ENCODE measurements at regions of chr7 and their contacts with region 1.

Region 1: DNA sequence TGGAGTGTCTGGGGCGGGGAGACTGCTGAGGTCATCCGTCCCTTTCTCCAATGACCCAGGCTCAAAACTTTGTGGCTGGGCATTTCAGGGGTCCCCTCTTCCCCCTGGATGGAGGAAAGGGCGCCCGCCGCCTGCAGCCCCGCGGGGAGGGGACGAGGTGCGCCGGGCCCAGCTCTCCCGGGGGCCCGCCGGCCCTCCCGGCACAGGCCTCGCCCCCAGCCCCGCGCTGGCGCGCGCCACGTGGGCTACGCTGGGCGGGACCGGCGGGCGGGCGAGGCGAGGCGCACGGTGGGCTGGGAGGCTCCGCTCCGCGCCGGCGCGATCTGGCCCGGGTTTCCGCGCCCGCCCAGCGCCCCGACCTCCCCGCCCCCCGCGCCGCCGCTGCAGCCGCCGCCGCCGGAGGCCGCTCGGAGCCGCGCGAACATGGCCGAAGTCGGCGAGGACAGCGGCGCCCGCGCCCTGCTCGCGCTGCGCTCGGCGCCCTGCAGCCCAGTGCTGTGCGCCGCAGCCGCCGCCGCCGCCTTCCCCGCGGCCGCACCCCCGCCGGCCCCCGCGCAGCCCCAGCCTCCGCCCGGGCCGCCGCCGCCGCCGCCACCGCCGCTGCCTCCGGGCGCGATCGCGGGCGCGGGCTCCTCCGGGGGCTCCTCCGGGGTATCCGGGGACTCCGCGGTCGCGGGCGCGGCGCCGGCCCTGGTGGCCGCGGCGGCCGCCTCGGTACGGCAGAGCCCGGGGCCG is at the start of gene FOXK1:
- H3K4me3 Mint-ChIP-seq: peak within 1 kb of the TSS; percentile 85
- H3K27ac Mint-ChIP-seq: peak within 1 kb of the TSS; percentile 93
- H3K4me1 Mint-ChIP-seq: peaks cover 47% of the 10 kb centered on the region
- H3K27me3 Mint-ChIP-seq: peaks cover 1% of the 10 kb centered on the region

Region 2: GRCh38 chr7:4641667-4642467 is 40.2 kb before region 1 on chr7:
- intact Hi-C with region 1: loop called (anchors 1 kb)
- H3K4me3 Mint-ChIP-seq: peak overlapping the region; percentile 91
- H3K27ac Mint-ChIP-seq: peak overlapping the region; percentile 91
- H3K4me1 Mint-ChIP-seq: peaks cover 6% of the 10 kb centered on the region
- H3K27me3 Mint-ChIP-seq: peaks cover 1% of the 10 kb centered on the region

Region 3: GRCh38 chr7:4665661-4666060 is 16.4 kb before region 1 on chr7:
- intact Hi-C with region 1: no loop called
- H3K4me3 Mint-ChIP-seq: no peak overlapping the region
- H3K27ac Mint-ChIP-seq: no peak overlapping the region
- H3K4me1 Mint-ChIP-seq: no peaks in the 10 kb centered on the region
- H3K27me3 Mint-ChIP-seq: no peaks in the 10 kb centered on the region

Region 4: GRCh38 chr7:4725014-4725849 is 43.2 kb after region 1 on chr7:
- intact Hi-C with region 1: loop called (anchors 5 kb)
- H3K4me3 Mint-ChIP-seq: peak overlapping the region; percentile 79
- H3K27ac Mint-ChIP-seq: peak overlapping the region; percentile 94
- H3K4me1 Mint-ChIP-seq: peaks cover 74% of the 10 kb centered on the region
- H3K27me3 Mint-ChIP-seq: no peaks in the 10 kb centered on the region

Region 5: DNA sequence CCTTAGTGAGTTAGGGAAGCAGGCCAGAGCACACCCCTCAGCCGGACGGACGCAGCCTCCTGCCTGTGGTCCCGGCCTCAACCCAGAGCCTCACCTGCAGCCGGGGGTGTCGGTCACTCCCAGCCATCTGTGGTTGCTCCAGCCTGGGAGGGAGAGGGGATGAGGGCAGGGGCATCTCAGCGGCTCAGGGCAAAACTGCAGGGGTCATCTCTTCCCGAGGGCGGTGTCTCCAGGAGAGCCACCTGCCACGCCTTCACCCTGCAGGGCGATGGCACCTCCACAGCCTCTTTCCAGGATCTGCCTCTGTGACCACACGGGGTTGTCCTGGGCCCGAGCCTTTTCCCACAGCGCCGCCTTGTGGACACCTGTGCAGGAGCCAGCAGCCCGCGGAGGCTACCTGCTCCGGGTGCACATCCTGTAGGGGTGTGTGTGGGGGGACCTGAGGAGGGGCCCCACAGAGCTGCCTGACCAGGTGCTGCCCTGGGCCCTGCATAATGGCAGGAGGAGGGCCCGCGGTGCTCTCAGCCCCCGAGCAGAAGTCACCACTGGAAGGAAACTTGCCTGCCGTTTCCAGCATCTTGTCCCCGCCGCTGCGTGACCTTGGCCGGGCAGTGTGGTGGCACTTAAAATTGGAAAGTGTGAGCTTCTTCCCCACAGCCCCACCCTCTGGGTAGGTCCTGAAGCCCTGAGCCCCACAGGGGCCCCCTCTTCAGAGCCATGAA is 71.8 kb after region 1 on chr7:
- intact Hi-C with region 1: loop called (anchors 2 kb)
- H3K4me3 Mint-ChIP-seq: no peak overlapping the region
- H3K27ac Mint-ChIP-seq: no peak overlapping the region
- H3K4me1 Mint-ChIP-seq: peaks cover 15% of the 10 kb centered on the region
- H3K27me3 Mint-ChIP-seq: no peaks in the 10 kb centered on the region

Measured in dendritic cell treated with granulocyte-macrophage colony-stimulating factor and Interleukin-4, amounts not matched to agents 40 ng/mL and 50 ng/mL, for 4 days (primary cell).